Endothelial cell of umbilical vein (primary cell): ENCODE measurements at regions of chr6 and their contacts with region 1.

Region 1: GRCh38 chr6:112780498-112781096 is 433.5 kb downstream of the RFPL4B start:
- DNase-seq: peak; percentile 87
- H3K4me3 ChIP-seq: no peak overlapping the region
- H3K27ac ChIP-seq: peak overlapping the region; percentile 19
- H3K4me1 ChIP-seq: peaks cover 6% of the 10 kb centered on the region
- H3K27me3 ChIP-seq: no peaks in the 10 kb centered on the region
- CTCF ChIP-seq: peak; percentile 53 to 67
- POLR2A ChIP-seq: no peak

Region 2: GRCh38 chr6:112879920-112880413 is 99.4 kb after region 1 on chr6:
- CTCF ChIA-PET with region 1: no interaction called
- POLR2A ChIA-PET with region 1: no interaction called
- dilution Hi-C with region 1: no loop called
- intact Hi-C with region 1: loop called (anchors 1 kb)
- DNase-seq: no peak
- H3K4me3 ChIP-seq: no peak overlapping the region
- H3K27ac ChIP-seq: no peak overlapping the region
- H3K4me1 ChIP-seq: peaks cover 23% of the 10 kb centered on the region
- H3K27me3 ChIP-seq: no peaks in the 10 kb centered on the region
- CTCF ChIP-seq: no peak
- POLR2A ChIP-seq: no peak

Region 3: DNA sequence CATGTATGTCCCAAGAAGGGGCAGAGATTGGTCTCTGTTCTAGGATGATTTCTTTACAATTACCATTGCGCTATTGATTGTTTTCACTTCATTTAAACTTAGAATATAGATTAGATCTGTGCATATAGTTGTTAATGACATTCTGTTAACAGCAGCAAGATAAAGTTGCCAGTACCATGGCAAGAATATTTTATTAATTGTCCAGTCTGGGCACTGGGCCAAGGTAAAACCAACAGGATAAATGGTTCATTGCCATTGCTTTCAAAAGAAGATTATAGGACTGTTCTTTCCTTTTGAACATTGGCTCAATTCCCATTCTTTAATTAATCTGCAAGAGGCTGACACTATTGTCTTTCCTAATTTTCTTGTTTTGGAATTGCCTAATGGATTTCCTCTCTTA is 159.0 kb after region 1 on chr6:
- CTCF ChIA-PET with region 1: no interaction called
- POLR2A ChIA-PET with region 1: no interaction called
- dilution Hi-C with region 1: no loop called
- intact Hi-C with region 1: no loop called
- DNase-seq: peak; percentile 86
- H3K4me3 ChIP-seq: no peak overlapping the region
- H3K27ac ChIP-seq: no peak overlapping the region
- H3K4me1 ChIP-seq: peaks cover 12% of the 10 kb centered on the region
- H3K27me3 ChIP-seq: no peaks in the 10 kb centered on the region
- CTCF ChIP-seq: no peak
- POLR2A ChIP-seq: no peak

Region 4: DNA sequence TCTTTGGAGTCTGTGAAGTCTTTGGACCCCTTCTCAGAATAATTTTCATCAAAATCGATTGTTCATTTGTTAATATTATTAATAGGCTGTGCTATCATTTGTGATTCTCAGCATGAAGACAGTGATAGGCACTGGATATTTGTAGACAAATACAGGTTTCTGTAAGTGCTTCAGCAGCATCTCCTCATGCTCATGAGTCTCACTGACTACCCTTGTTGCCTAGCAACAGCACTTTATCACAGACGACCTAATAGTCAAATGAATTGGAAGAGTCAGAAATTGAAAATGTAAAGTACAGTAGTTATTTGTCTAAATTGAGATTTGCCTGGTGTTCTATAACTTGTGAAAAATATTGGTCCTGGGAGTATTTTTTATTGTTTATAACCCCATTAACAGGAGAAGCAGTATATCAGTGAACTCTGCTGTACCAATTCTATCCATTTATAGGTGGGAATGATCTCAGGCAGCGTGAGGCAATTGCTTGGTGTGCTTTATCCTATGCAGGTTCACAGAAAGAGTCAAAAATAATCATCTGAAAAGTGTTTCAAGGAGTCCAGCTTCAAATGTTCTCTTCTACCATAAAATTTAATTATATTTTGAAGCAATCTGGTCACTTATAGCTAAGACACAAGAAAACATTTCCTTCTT is 251.1 kb after region 1 on chr6:
- CTCF ChIA-PET with region 1: no interaction called
- POLR2A ChIA-PET with region 1: no interaction called
- dilution Hi-C with region 1: no loop called
- intact Hi-C with region 1: no loop called
- DNase-seq: no peak
- H3K4me3 ChIP-seq: no peak overlapping the region
- H3K27ac ChIP-seq: no peak overlapping the region
- H3K4me1 ChIP-seq: no peaks in the 10 kb centered on the region
- H3K27me3 ChIP-seq: no peaks in the 10 kb centered on the region
- CTCF ChIP-seq: no peak
- POLR2A ChIP-seq: no peak

Region 5: DNA sequence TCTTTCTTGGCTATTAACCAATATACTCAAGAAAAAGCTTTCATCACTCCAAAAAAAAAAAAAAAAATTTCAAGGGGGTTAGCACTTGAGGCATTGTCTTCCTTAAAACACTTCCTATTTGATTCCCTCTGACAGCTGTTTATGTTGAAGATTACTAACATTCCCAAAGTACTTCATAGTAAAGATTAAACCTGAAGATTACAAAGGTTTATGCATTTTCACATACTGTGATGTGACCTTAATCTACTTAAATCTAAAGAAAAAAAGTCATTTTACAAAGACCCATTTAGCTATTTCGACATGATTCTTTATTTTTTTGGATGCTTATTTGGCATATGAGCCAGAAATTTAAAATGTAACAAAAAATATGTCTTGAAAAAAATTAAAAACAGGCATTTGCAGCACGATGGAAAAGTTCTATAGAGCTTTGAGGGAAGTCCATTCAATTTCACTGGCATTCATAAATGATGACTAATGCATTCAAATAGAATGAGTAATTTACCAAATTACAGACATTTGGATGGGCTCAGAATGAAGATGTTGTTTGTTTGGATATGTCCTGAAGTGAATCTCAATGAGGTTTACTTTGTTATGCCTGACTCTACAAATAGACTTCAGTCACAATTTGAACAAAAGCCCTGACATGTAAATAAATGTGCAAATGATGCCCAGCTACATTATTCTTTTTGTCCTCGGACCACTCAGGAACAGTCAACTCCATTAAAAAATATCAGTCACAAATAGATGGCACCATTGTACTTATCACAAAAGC is 402.0 kb after region 1 on chr6:
- CTCF ChIA-PET with region 1: interaction called, 3 read pairs
- POLR2A ChIA-PET with region 1: no interaction called
- dilution Hi-C with region 1: no loop called
- intact Hi-C with region 1: loop called (anchors 1 kb)
- DNase-seq: peak; percentile 82
- H3K4me3 ChIP-seq: peak overlapping the region in 1 of 3 experiments; percentile 38
- H3K27ac ChIP-seq: peak overlapping the region; percentile 87
- H3K4me1 ChIP-seq: peaks cover 29% of the 10 kb centered on the region
- H3K27me3 ChIP-seq: no peaks in the 10 kb centered on the region
- CTCF ChIP-seq: no peak
- POLR2A ChIP-seq: no peak

Region 6: DNA sequence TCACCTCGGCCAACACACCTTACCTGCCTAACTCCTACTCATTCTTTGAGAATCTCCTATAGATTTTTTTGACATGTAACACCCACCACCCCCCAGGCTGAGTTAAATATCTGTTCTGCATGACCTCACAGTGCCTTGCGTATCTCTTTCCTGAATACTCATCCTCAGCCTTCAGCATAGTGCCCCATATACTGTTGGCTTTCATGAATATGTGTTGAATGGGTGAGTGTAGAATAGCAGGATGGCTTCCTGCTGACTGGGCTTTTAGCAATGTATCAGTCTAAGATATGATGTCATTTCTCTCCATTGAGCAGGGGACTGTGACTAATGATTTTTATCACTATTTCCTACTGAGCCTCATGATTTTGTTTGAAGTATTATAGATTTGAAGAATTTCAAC is 714.9 kb after region 1 on chr6:
- CTCF ChIA-PET with region 1: no interaction called
- POLR2A ChIA-PET with region 1: no interaction called
- dilution Hi-C with region 1: no loop called
- intact Hi-C with region 1: loop called (anchors 2 kb)
- DNase-seq: peak; percentile 91
- H3K4me3 ChIP-seq: no peak overlapping the region
- H3K27ac ChIP-seq: peak overlapping the region; percentile 100
- H3K4me1 ChIP-seq: peaks cover 33% of the 10 kb centered on the region
- H3K27me3 ChIP-seq: no peaks in the 10 kb centered on the region
- CTCF ChIP-seq: no peak
- POLR2A ChIP-seq: no peak

Region 7: GRCh38 chr6:113909234-113909856 is 1128.7 kb after region 1 on chr6:
- CTCF ChIA-PET with region 1: interaction called, 15 read pairs
- POLR2A ChIA-PET with region 1: no interaction called
- dilution Hi-C with region 1: no loop called
- intact Hi-C with region 1: loop called (anchors 1 kb)
- DNase-seq: peak; percentile 81
- H3K4me3 ChIP-seq: no peak overlapping the region
- H3K27ac ChIP-seq: no peak overlapping the region
- H3K4me1 ChIP-seq: peaks cover 2% of the 10 kb centered on the region
- H3K27me3 ChIP-seq: no peaks in the 10 kb centered on the region
- CTCF ChIP-seq: peak; percentile 30 to 37
- POLR2A ChIP-seq: no peak